Right cardiac atrium (tissue), 5 donors: ENCODE measurements at regions of chr2 and their contacts with region 1.

Region 1: DNA sequence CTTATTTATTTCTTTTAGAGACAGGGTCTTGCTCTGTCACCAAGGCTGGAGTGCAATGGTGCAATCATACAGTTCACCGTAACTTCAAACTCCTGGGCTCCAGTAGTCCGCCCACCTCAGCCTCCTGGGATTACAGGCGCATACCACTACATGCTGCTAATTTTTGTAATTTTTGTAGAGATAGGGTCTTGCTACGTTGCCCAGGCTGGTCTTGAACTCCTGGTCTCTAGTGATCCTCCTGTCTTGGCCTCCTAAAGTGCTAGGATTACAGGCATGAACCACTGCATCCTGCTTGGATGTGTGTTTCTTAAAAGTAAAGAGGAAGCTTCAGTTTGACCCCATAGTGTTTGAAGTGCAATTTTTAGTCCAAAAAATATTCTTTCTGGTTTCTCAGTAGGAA is 105.0 kb upstream of the KIF5C start:
- DNase-seq: no peak
- ATAC-seq: no peak
- H3K4me3 ChIP-seq: no peak overlapping the region
- H3K27ac ChIP-seq: no peak overlapping the region
- H3K4me1 ChIP-seq: no peaks in the 10 kb centered on the region
- H3K27me3 ChIP-seq: no peaks in the 10 kb centered on the region

Region 2: GRCh38 chr2:147843864-147844696 is 926.0 kb before region 1 on chr2:
- intact Hi-C with region 1: loop called in 1 of 4 experiments (anchors 10 kb)
- DNase-seq: peak; percentile 93 to 97 (median 97)
- ATAC-seq: peak; percentile 97 to 98
- H3K4me3 ChIP-seq: peak overlapping the region; percentile 99
- H3K27ac ChIP-seq: peak overlapping the region; percentile 100
- H3K4me1 ChIP-seq: peaks cover 5% of the 10 kb centered on the region
- H3K27me3 ChIP-seq: no peaks in the 10 kb centered on the region

Region 3: GRCh38 chr2:148644883-148645538 is 125.0 kb before region 1 on chr2:
- intact Hi-C with region 1: loop called in 1 of 4 experiments (anchors 10 kb)
- DNase-seq: peak; percentile 94 to 98 (median 97)
- ATAC-seq: peak; percentile 92
- H3K4me3 ChIP-seq: peak overlapping the region; percentile 92
- H3K27ac ChIP-seq: peak overlapping the region; percentile 98
- H3K4me1 ChIP-seq: no peaks in the 10 kb centered on the region
- H3K27me3 ChIP-seq: no peaks in the 10 kb centered on the region

Region 4: GRCh38 chr2:148926291-148926961 is 156.4 kb after region 1 on chr2:
- intact Hi-C with region 1: no loop called
- DNase-seq: peak in 2 of 3 donors; percentile 59 to 69
- ATAC-seq: peak; percentile 50 to 65
- H3K4me3 ChIP-seq: no peak overlapping the region
- H3K27ac ChIP-seq: no peak overlapping the region
- H3K4me1 ChIP-seq: no peaks in the 10 kb centered on the region
- H3K27me3 ChIP-seq: no peaks in the 10 kb centered on the region